ENCODE measurements at regions of chr9 and their contacts with region 1.

Region 1: DNA sequence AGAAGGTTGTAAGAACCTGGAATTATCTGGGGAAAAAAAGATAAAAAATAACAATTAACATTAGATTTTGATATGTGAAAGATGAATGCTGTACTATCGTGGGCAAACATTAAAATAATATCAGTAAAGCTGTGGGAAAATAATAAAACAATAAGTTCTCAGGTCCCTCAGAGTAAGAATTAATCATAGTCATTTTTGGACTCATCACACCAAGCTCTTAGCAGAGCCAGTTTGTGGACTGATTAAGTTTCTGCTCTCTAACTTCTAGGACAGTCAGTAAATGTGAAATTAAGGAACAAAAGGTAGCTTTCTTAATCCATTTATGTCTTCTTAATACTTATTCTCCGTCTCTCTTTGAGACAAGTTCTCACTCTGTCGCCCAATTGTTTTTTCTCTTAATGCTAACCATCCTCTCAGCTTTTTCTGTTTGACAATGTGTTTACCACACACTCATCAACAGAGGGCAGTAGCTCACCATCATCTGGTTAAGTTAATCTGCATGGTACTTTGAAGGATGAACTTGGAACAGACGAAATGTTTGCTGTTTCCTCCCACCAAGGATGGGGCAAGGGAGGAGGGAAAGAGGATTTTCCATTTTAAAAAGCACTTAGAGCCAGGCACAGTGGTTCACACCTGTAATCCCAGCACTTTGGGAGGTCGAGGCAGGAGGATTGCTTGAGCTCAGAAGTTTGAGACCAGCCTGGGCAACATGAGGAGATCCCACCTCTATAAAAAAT is 5.3 kb upstream of the ACO1 start:
- DNase-seq: peak; percentile 42
- H3K4me3 Mint-ChIP-seq: peak overlapping the region; percentile 16
- H3K27ac Mint-ChIP-seq: no peak overlapping the region
- H3K4me1 Mint-ChIP-seq: peaks cover 7% of the 10 kb centered on the region
- H3K27me3 Mint-ChIP-seq: peaks cover 21% of the 10 kb centered on the region

Region 2: DNA sequence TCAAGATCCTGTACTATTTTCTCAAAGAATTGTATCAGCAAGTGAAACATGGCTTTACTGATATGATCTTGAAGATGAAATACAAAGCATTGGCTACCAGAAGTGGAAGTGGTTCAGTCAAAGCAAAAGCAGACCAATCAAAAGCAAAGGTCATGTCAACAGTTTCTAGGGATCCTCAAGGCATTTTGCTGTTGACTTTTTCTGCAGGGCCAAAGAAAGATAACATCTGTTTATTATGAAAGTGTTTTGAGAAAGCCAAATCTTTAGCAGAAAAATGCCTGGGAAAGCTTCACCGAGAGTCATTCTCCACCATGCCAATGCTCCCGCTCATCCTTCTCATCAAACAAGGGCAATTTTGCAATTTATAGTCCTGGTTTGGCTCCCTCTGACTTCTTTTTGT is 85.1 kb before region 1 on chr9:
- intact Hi-C with region 1: no loop called
- DNase-seq: no peak
- H3K4me3 Mint-ChIP-seq: no peak overlapping the region
- H3K27ac Mint-ChIP-seq: no peak overlapping the region
- H3K4me1 Mint-ChIP-seq: no peaks in the 10 kb centered on the region
- H3K27me3 Mint-ChIP-seq: no peaks in the 10 kb centered on the region

Region 3: DNA sequence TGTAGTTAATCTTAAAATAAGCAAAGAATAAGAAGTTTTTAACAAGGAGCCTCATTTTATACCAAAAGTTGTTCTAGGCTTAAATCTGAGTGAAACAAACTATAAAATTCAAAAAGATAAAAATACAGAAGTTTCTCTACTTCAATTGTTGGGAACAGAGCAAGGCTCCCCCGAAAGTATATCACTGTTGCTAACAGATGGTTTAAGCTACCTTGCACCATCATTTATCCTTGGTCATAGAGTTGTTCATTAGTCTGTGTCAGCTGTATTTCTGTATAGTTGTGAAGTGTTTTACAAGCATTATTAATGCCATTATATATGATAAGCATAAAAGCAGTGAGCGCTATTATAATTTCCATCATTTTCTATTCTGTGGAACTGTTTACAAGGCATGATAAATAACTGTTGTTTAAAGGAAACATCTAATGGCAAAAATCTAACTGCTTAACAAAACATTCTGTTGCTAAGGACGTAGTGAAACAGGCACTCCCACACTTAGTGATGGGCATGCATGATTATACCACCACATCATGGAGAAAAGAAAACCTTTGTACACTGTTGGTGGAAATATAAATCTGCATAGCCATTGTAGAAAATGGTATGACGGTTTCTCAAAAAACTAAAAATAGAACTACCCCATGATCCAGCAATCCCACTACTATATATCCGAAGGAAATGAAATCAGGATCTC is 18.0 kb before region 1 on chr9:
- intact Hi-C with region 1: no loop called
- DNase-seq: no peak
- H3K4me3 Mint-ChIP-seq: no peak overlapping the region
- H3K27ac Mint-ChIP-seq: no peak overlapping the region
- H3K4me1 Mint-ChIP-seq: no peaks in the 10 kb centered on the region
- H3K27me3 Mint-ChIP-seq: peaks cover 4% of the 10 kb centered on the region

Region 4: DNA sequence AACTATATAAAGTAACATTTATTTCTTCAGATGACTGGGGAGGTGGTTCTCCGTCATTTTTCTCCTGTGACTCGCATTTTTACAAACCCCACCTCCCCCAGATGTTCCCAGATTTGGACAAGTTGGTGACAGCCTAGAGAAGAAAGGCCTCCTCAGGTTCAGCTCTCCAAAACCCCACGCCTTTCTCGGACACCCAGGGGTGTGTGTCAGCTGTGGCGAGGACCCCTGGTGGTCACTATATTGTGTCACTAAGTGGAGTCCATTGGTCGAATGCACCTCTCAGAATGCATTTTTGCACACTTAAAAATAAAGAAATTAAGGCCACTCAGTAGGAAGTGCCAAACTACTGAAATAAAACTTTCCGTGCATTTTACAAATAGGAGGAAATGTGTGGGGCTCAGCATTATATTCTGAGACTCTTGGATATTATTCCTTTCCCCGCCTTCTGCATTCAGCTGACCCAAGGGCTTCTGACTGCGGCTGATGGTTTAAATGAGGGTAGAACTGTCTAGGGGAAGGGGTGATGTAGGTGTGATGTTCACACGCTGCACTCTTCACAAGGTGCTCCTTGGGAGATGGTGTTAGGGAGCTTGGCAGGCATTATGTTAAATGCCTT is 52.9 kb after region 1 on chr9:
- intact Hi-C with region 1: loop called (anchors 1 kb)
- DNase-seq: no peak
- H3K4me3 Mint-ChIP-seq: no peak overlapping the region
- H3K27ac Mint-ChIP-seq: no peak overlapping the region
- H3K4me1 Mint-ChIP-seq: peaks cover 6% of the 10 kb centered on the region
- H3K27me3 Mint-ChIP-seq: no peaks in the 10 kb centered on the region

Region 5: DNA sequence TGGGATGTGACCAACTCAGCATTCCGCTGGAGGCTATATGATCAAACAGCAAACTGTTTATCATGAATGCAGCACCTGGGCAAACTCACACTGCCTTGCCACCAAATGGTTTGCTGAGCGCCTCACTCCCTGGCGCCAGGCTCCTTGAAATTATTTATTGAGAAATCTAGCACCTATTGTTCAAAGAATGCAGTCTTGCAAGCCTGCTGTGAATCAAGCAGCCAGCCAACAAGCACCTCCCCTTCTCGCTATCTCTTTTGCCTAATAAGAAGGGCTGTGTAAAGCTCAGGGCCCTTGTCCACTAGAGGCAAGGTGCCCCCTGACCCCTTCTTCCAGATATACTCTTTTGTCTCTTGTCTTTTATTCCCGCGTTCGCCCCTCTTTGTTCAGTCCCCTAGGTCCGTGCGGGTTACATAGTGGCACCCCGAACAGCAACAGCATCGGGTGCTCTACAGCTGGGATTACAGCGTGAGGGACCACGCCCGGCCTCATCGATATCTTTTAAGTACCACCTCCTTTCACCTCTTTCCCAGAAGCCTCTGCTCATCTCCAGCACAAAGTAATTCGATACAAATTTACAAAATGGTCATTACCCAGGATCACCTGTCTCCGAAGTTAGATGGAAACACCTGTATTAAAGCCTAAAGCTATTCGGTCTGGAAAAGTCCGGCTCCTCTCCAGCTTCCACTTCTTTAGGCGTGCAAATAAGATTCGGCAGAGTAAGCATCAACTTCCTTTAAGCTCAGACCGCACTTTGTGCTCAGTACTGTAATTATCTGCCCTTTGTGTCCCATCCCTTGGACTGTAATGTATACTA is 145.9 kb after region 1 on chr9:
- intact Hi-C with region 1: loop called (anchors 1 kb)
- DNase-seq: no peak
- H3K4me3 Mint-ChIP-seq: peak overlapping the region; percentile 92
- H3K27ac Mint-ChIP-seq: peak overlapping the region; percentile 86
- H3K4me1 Mint-ChIP-seq: peaks cover 53% of the 10 kb centered on the region
- H3K27me3 Mint-ChIP-seq: no peaks in the 10 kb centered on the region

Region 6: GRCh38 chr9:32579706-32580331 is 200.7 kb after region 1 on chr9:
- intact Hi-C with region 1: loop called (anchors 1 kb)
- DNase-seq: peak; percentile 53
- H3K4me3 Mint-ChIP-seq: no peak overlapping the region
- H3K27ac Mint-ChIP-seq: no peak overlapping the region
- H3K4me1 Mint-ChIP-seq: no peaks in the 10 kb centered on the region
- H3K27me3 Mint-ChIP-seq: peaks cover 29% of the 10 kb centered on the region

Region 7: GRCh38 chr9:32968101-32969011 is 589.2 kb after region 1 on chr9:
- intact Hi-C with region 1: loop called (anchors 1 kb)
- DNase-seq: peak; percentile 21
- H3K4me3 Mint-ChIP-seq: no peak overlapping the region
- H3K27ac Mint-ChIP-seq: no peak overlapping the region
- H3K4me1 Mint-ChIP-seq: no peaks in the 10 kb centered on the region
- H3K27me3 Mint-ChIP-seq: no peaks in the 10 kb centered on the region

Measured in activated T-helper 1 cell treated with anti-CD3 and anti-CD28 coated beads, Interleukin-12 subunit alpha, Interleukin-12 subunit beta, Interleukin-2, Interleukin-4 antibody, amounts not matched to agents 30 ng/mL and 10 ng/mL and 1 ng/mL, durations not matched to agents 14 hours and 24 hours and 36 hours (primary cell).